CD4-positive, alpha-beta memory T cell (primary cell): ENCODE measurements at regions of chr12 and their contacts with region 1.

Region 1: GRCh38 chr12:49358483-49359141 is 8.7 kb upstream of the SPATS2 start:
- DNase-seq: peak; percentile 63 to 70 (median 65)
- H3K4me3 ChIP-seq: no peak overlapping the region
- H3K4me3 Mint-ChIP-seq: no peak overlapping the region
- H3K27ac ChIP-seq: no peak overlapping the region
- H3K27ac Mint-ChIP-seq: no peak overlapping the region
- H3K4me1 ChIP-seq: no peaks in the 10 kb centered on the region
- H3K4me1 Mint-ChIP-seq: peaks cover 0 to 5% (median 4%) of the 10 kb centered on the region in 4 donors
- H3K27me3 ChIP-seq: peaks cover 6% of the 10 kb centered on the region
- H3K27me3 Mint-ChIP-seq: peaks cover 20 to 23% of the 10 kb centered on the region in 2 donors

Region 2: DNA sequence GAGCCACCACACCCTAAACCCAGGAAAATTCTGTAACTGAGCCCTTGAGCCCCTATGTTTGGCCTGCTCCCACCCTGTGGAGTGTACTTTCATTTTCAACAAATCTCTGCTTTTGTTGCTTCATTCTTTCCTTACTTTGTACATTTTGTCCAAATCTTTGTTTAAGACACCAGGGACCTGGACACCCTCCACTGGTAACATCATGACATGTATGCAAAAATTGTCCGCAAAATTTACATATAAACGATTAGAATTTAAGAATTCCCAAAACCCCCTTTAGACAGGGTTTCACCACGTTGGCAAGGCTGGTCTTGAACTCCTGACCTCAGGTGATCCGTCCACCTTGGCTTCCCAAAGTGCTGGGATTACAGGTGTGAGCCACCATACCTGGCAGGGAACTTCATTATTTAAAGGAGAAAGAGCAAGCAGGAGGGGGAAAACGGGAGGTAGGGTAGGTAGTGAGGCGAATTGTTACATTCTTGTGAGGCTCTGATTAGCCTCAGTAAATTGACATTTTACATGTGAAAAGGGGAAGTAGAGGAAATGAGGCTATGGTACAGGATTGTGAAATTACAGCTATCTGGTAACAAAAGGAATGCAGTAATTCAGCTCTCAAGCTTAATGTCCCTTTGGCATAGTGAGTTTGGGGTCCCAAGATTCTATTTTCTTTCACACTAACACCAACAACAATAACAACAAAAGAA is 197.4 kb before region 1 on chr12:
- CTCF ChIA-PET with region 1: no interaction called
- POLR2A ChIA-PET with region 1: no interaction called
- intact Hi-C with region 1: no loop called
- DNase-seq: no peak
- H3K4me3 ChIP-seq: no peak overlapping the region
- H3K4me3 Mint-ChIP-seq: no peak overlapping the region
- H3K27ac ChIP-seq: no peak overlapping the region
- H3K27ac Mint-ChIP-seq: no peak overlapping the region
- H3K4me1 ChIP-seq: no peaks in the 10 kb centered on the region
- H3K4me1 Mint-ChIP-seq: no peaks in the 10 kb centered on the region
- H3K27me3 ChIP-seq: no peaks in the 10 kb centered on the region
- H3K27me3 Mint-ChIP-seq: no peaks in the 10 kb centered on the region

Region 3: GRCh38 chr12:49225556-49226181 is 132.9 kb before region 1 on chr12:
- CTCF ChIA-PET with region 1: no interaction called
- POLR2A ChIA-PET with region 1: no interaction called
- intact Hi-C with region 1: no loop called
- DNase-seq: no peak
- H3K4me3 ChIP-seq: no peak overlapping the region
- H3K4me3 Mint-ChIP-seq: no peak overlapping the region
- H3K27ac ChIP-seq: no peak overlapping the region
- H3K27ac Mint-ChIP-seq: no peak overlapping the region
- H3K4me1 ChIP-seq: no peaks in the 10 kb centered on the region
- H3K4me1 Mint-ChIP-seq: no peaks in the 10 kb centered on the region
- H3K27me3 ChIP-seq: no peaks in the 10 kb centered on the region
- H3K27me3 Mint-ChIP-seq: no peaks in the 10 kb centered on the region

Region 4: GRCh38 chr12:49288412-49288853 is 70.2 kb before region 1 on chr12:
- CTCF ChIA-PET with region 1: interaction called, 26 read pairs
- POLR2A ChIA-PET with region 1: no interaction called
- intact Hi-C with region 1: no loop called
- DNase-seq: peak; percentile 61 to 75 (median 68)
- H3K4me3 ChIP-seq: no peak overlapping the region
- H3K4me3 Mint-ChIP-seq: no peak overlapping the region
- H3K27ac ChIP-seq: no peak overlapping the region
- H3K27ac Mint-ChIP-seq: peak overlapping the region in 1 of 7 donors; percentile 36
- H3K4me1 ChIP-seq: no peaks in the 10 kb centered on the region
- H3K4me1 Mint-ChIP-seq: peaks cover 0 to 4% (median 2%) of the 10 kb centered on the region in 4 donors
- H3K27me3 ChIP-seq: no peaks in the 10 kb centered on the region
- H3K27me3 Mint-ChIP-seq: peaks cover 20% of the 10 kb centered on the region in 2 donors

Region 5: DNA sequence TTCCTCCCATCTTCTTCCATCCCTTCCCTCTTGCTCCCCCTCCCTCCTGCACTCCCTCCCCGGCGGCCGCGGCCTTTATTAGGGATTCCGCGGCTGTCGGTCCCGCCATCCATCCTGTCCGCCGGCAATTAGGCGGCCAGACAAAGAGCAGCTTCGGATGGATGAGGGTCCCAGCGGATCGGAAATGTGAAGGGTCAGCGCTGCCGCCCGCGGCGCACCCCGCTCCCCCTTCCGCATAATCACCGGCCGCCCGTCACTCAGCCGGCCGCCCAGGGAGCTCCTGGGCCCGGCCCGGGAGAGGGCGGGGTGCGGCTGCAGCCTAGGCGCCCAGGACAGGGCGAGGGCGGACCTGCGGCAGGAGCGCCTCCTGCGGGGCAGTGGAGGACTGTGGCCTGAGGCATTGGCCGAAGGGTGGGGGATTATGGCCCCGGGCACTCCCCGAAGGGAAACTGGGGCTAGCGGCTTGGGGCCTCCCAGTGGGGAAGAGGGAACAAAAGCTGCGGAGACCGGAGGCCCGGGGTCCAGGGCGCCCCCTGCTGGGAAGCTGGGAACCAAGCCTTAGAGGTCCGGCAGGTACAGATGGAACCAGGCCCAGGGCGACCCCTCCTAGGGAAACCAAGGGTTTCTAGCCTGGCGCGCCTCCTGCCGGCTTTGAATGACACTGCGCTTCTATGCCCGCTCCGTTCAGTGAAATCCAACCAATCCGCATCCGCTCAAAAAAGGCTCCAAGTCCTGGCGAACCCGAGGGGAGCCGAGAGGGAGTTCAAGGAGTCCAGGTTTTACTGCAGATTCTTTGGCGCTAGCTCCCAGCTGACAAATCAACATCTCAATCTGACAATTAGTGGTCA is 16.3 kb before region 1 on chr12:
- CTCF ChIA-PET with region 1: interaction called, 51 read pairs
- POLR2A ChIA-PET with region 1: no interaction called
- intact Hi-C with region 1: no loop called
- DNase-seq: peak; percentile 60 to 75 (median 64)
- H3K4me3 ChIP-seq: peak overlapping the region; percentile 30 to 53
- H3K4me3 Mint-ChIP-seq: peak overlapping the region; percentile 49 to 89 (median 78)
- H3K27ac ChIP-seq: no peak overlapping the region
- H3K27ac Mint-ChIP-seq: peak overlapping the region in 4 of 7 donors; percentile 55 to 79 (median 65)
- H3K4me1 ChIP-seq: peaks cover 52% of the 10 kb centered on the region
- H3K4me1 Mint-ChIP-seq: peaks cover 19 to 64% (median 40%) of the 10 kb centered on the region in 4 donors
- H3K27me3 ChIP-seq: peaks cover 47% of the 10 kb centered on the region
- H3K27me3 Mint-ChIP-seq: peaks cover 25 to 56% of the 10 kb centered on the region in 2 donors

Region 6: DNA sequence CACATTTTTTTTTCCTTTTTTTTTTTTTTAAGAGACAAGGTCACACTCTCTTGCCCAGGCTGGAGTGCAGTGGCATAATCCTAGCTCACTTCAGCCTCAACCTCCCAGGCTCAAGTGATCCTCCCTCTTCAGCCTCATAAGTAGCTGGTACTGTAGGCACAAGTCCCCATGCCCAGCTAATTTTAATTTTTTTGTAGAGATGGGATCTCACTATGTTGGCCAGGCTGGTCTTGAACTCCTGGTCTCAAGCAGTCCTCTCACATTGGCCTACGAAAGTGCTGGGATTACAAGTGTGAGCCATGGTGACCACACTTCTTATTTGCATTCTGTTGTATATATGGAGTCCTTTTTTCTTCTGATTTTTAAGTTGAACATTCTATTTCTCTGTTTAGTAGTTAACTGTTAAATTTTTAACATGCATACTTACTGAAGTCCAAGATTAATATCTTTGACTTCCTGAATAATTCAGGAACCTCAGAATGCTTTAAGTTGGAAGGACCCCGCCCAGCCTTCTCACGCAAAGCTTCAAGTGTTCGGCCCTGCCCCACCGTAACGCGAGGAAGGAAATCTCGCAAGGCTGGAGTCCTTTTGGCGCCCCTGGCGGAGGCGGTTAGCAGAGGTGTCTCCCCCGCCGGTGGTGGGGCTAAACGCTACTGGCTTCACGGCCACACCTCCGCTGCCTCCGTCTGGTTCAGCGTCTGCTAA is 30.2 kb after region 1 on chr12:
- CTCF ChIA-PET with region 1: interaction called, 9 read pairs
- POLR2A ChIA-PET with region 1: no interaction called
- intact Hi-C with region 1: loop called (anchors 1 kb)
- DNase-seq: peak; percentile 38 to 65 (median 51)
- H3K4me3 ChIP-seq: no peak overlapping the region
- H3K4me3 Mint-ChIP-seq: peak overlapping the region in 7 of 8 donors; percentile 1 to 69 (median 49)
- H3K27ac ChIP-seq: no peak overlapping the region
- H3K27ac Mint-ChIP-seq: peak overlapping the region in 1 of 7 donors; percentile 6
- H3K4me1 ChIP-seq: no peaks in the 10 kb centered on the region
- H3K4me1 Mint-ChIP-seq: peaks cover 4 to 10% (median 5%) of the 10 kb centered on the region in 4 donors
- H3K27me3 ChIP-seq: no peaks in the 10 kb centered on the region
- H3K27me3 Mint-ChIP-seq: no peaks in the 10 kb centered on the region

Region 7: DNA sequence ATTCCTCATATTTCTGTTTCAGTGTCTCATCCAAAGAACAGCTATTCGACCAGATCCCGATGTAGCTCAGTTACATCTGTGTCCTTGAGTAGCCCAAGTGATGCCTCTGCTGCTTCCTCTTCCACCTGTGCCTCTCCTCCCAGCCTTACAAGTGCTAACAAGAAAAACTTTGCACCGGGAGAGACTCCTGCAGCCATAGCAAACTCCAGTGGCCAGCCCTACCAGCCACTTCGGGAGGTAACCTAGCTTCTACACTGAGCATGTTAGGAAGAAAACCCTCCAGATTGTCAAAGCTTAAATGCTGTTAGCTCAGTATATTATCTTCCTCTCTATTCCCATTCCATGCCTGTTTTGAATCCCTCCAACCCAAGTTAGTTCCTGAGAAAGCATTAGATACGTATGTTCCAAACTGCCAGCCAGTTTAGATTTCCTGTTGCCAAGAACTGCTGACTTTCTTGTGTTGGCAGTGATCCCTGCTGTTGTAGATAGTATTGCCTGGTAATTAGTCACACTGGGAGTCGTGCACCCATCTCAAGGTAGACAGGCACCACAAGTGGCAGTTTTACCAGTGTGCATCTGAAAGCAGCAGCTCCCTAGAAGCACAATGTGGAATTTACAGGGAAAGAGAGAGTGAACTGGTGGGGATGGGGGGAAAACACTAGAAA is 166.2 kb after region 1 on chr12:
- CTCF ChIA-PET with region 1: interaction called, 538 read pairs
- POLR2A ChIA-PET with region 1: no interaction called
- intact Hi-C with region 1: no loop called
- DNase-seq: no peak
- H3K4me3 ChIP-seq: no peak overlapping the region
- H3K4me3 Mint-ChIP-seq: no peak overlapping the region
- H3K27ac ChIP-seq: no peak overlapping the region
- H3K27ac Mint-ChIP-seq: no peak overlapping the region
- H3K4me1 ChIP-seq: no peaks in the 10 kb centered on the region
- H3K4me1 Mint-ChIP-seq: peaks cover 0 to 1% (median 0%) of the 10 kb centered on the region in 4 donors
- H3K27me3 ChIP-seq: no peaks in the 10 kb centered on the region
- H3K27me3 Mint-ChIP-seq: no peaks in the 10 kb centered on the region

Region 8: DNA sequence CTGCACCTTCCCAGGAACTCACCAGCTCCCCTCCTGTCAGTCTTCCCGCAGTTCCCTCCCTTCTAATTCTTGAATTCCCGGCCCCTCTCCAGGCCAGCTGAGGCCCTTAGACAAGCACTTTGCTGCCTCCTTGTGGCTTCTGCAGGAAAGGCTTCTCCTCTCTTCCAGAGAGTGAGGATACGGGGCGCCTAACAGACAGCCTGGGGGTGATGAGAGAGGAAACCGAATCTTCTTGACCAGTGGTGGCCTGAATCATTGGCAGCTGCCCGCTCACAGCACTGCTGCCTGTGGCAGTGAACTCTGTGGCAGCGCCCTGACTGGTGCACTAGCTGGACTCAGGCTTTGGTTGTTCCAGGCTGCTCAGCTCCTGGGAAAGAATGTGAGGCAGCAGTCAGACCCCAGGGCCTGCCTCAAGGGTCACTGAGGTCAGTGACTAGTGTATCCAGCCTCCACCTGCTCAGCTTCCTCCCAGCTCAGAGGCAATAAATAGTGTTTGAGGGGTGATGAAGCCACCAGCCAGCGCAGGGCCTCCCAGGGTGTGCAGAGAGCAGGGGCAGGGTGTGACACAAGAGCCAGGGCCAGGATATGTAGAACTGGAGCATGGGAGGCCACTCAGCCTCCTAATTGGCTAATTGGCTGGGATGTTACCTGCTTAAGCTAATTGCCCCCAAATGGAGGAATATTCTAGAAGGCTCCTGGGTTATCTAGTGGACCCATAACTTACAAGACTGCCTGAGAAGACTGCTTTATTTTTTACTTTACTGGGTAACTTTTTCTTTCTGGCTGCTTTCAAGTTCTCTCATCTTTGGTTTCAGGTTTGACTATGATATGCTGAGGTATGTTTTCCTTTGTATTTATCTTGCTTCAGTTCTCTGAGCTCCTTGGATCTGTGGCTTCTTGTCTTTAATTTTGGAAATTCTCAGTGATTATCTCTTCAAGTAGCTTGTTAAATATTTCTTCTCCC is 222.2 kb after region 1 on chr12:
- CTCF ChIA-PET with region 1: interaction called, 44 read pairs
- POLR2A ChIA-PET with region 1: interaction called, 3 read pairs
- intact Hi-C with region 1: loop called (anchors 1 kb)
- DNase-seq: peak in 4 of 5 donors; percentile 32 to 57 (median 48)
- H3K4me3 ChIP-seq: no peak overlapping the region
- H3K4me3 Mint-ChIP-seq: no peak overlapping the region
- H3K27ac ChIP-seq: no peak overlapping the region
- H3K27ac Mint-ChIP-seq: peak overlapping the region in 3 of 7 donors; percentile 3 to 61 (median 4)
- H3K4me1 ChIP-seq: no peaks in the 10 kb centered on the region
- H3K4me1 Mint-ChIP-seq: peaks cover 0 to 7% (median 5%) of the 10 kb centered on the region in 4 donors
- H3K27me3 ChIP-seq: no peaks in the 10 kb centered on the region
- H3K27me3 Mint-ChIP-seq: no peaks in the 10 kb centered on the region

Region 9: GRCh38 chr12:50665139-50665538 is 1306.5 kb after region 1 on chr12:
- CTCF ChIA-PET with region 1: no interaction called
- POLR2A ChIA-PET with region 1: no interaction called
- intact Hi-C with region 1: no loop called
- DNase-seq: no peak
- H3K4me3 ChIP-seq: no peak overlapping the region
- H3K4me3 Mint-ChIP-seq: no peak overlapping the region
- H3K27ac ChIP-seq: no peak overlapping the region
- H3K27ac Mint-ChIP-seq: no peak overlapping the region
- H3K4me1 ChIP-seq: no peaks in the 10 kb centered on the region
- H3K4me1 Mint-ChIP-seq: peaks cover 0 to 6% (median 4%) of the 10 kb centered on the region in 4 donors
- H3K27me3 ChIP-seq: no peaks in the 10 kb centered on the region
- H3K27me3 Mint-ChIP-seq: no peaks in the 10 kb centered on the region